BJ (cell line): ENCODE measurements at regions of chr6 and their contacts with region 1.

Region 1: DNA sequence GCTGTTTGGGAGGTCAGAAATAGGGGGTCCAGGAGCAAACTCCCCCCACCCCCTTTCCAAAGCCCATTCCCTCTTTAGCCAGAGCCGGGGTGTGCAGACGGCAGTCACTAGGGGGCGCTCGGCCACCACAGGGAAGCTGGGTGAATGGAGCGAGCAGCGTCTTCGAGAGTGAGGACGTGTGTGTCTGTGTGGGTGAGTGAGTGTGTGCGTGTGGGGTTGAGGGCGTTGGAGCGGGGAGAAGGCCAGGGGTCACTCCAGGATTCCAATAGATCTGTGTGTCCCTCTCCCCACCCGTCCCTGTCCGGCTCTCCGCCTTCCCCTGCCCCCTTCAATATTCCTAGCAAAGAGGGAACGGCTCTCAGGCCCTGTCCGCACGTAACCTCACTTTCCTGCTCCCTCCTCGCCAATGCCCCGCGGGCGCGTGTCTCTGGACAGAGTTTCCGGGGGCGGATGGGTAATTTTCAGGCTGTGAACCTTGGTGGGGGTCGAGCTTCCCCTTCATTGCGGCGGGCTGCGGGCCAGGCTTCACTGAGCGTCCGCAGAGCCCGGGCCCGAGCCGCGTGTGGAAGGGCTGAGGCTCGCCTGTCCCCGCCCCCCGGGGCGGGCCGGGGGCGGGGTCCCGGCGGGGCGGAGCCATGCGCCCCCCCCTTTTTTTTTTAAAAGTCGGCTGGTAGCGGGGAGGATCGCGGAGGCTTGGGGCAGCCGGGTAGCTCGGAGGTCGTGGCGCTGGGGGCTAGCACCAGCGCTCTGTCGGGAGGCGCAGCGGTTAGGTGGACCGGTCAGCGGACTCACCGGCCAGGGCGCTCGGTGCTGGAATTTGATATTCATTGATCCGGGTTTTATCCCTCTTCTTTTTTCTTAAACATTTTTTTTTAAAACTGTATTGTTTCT is at the start of gene VEGFA:
- DNase-seq: no peak
- H3K4me3 ChIP-seq: peak within 1 kb of the TSS; percentile 94
- H3K27me3 ChIP-seq: peaks cover 3% of the 10 kb centered on the region; the same call in 1 of the 2 replicates
- CTCF ChIP-seq: peak; percentile 100
- polyA plus RNA-seq, gene VEGFA: 197 and 357 TPM in 2 replicates

Region 2: GRCh38 chr6:43096451-43097097 is 673.2 kb before region 1 on chr6:
- CTCF ChIA-PET with region 1: no interaction called
- POLR2A ChIA-PET with region 1: no interaction called
- DNase-seq: peak; percentile 84
- H3K4me3 ChIP-seq: no peak overlapping the region
- H3K27me3 ChIP-seq: no peaks in the 10 kb centered on the region
- CTCF ChIP-seq: no peak

Region 3: DNA sequence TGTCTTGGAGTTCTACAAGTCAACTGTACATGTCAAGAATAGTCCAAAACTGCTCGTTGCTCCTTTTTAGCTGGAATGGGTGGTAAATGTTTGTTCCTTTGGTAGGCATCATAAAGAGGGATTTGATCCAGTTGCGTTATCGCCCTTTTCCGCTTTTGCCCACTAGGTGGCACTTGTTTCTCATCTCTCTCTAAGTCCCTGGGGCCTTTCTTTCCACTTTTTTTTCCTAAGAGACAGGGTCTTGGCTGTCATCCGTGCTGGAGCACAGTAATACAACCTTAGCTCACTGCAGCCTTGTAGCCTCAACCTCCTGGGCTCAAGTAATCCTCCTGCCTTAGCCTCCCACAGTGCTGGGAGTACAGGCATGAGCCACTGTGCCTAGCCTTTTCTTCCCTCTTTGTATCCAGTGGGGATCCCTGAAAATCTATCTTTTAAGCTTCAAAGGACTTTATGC is 161.4 kb before region 1 on chr6:
- CTCF ChIA-PET with region 1: interaction called, 20 read pairs
- POLR2A ChIA-PET with region 1: no interaction called
- DNase-seq: no peak
- H3K4me3 ChIP-seq: no peak overlapping the region
- H3K27me3 ChIP-seq: no peaks in the 10 kb centered on the region
- CTCF ChIP-seq: peak; percentile 85

Region 4: GRCh38 chr6:43742931-43743632 is 26.7 kb before region 1 on chr6:
- CTCF ChIA-PET with region 1: interaction called, 11 read pairs
- POLR2A ChIA-PET with region 1: no interaction called
- DNase-seq: no peak
- H3K4me3 ChIP-seq: no peak overlapping the region
- H3K27me3 ChIP-seq: peaks cover 10% of the 10 kb centered on the region
- CTCF ChIP-seq: no peak

Region 5: GRCh38 chr6:44002593-44003344 is 233.0 kb after region 1 on chr6:
- CTCF ChIA-PET with region 1: interaction called, 13 read pairs
- POLR2A ChIA-PET with region 1: no interaction called
- DNase-seq: no peak
- H3K4me3 ChIP-seq: peak overlapping the region; percentile 5
- H3K27me3 ChIP-seq: no peaks in the 10 kb centered on the region
- CTCF ChIP-seq: peak; percentile 42

Region 6: GRCh38 chr6:44052419-44053023 is 282.8 kb after region 1 on chr6:
- CTCF ChIA-PET with region 1: interaction called, 11 read pairs
- POLR2A ChIA-PET with region 1: interaction called, 3 read pairs
- DNase-seq: no peak
- H3K4me3 ChIP-seq: no peak overlapping the region
- H3K27me3 ChIP-seq: no peaks in the 10 kb centered on the region
- CTCF ChIP-seq: peak; percentile 21; the same call in 1 of the 2 replicates